Mammary epithelial cell (primary cell): ENCODE measurements at regions of chr15 and their contacts with region 1.

Region 1: GRCh38 chr15:62377736-62378480 is 212.8 kb upstream of the C2CD4B start:
- DNase-seq: no peak
- H3K4me3 ChIP-seq: no peak overlapping the region
- H3K27ac ChIP-seq: no peak overlapping the region
- H3K4me1 ChIP-seq: no peaks in the 10 kb centered on the region
- H3K27me3 ChIP-seq: no peaks in the 10 kb centered on the region
- CTCF ChIP-seq: no peak

Region 2: DNA sequence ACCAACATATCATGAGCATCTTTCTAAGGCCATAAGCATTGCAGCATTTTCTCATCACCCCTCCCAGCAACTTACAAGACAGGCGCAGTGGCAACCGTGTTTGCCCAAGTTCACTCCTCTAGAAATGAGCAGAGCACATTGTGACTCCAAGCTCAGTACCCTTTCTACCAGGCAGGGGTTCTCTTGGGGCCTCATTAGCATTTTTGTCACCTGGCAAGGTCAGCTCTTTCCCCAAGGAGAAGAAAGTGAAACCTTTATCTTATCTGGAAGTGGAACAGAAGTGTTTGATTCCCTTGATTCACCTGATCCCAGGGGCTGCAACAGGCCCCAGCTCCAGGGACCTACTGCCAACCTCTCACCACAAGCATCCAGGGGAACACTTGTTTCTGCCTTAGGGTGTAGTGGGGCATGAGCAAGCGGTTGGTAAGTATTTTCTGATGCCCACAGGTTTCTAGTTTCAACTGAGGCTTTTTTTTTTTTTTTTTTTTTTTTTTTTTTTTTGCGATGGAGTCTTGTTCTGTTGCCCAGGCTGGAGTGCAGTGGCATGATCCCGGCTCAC is 1499.9 kb after region 1 on chr15:
- CTCF ChIA-PET with region 1: interaction called, 29 read pairs
- dilution Hi-C with region 1: no loop called
- in situ Hi-C with region 1: no loop called
- intact Hi-C with region 1: no loop called
- DNase-seq: peak; percentile 30
- H3K4me3 ChIP-seq: no peak overlapping the region
- H3K27ac ChIP-seq: no peak overlapping the region
- H3K4me1 ChIP-seq: no peaks in the 10 kb centered on the region
- H3K27me3 ChIP-seq: no peaks in the 10 kb centered on the region
- CTCF ChIP-seq: no peak